Activated CD8-positive, alpha-beta T cell treated with anti-CD3 and anti-CD28 coated beads for 36 hours (primary cell): ENCODE measurements at regions of chr1 and their contacts with region 1.

Region 1: GRCh38 chr1:165367375-165367993 is 11.0 kb upstream of the LMX1A start:
- DNase-seq: peak; percentile 88
- ATAC-seq: peak; percentile 74
- H3K4me3 Mint-ChIP-seq: no peak overlapping the region
- H3K27ac Mint-ChIP-seq: no peak overlapping the region
- H3K4me1 Mint-ChIP-seq: no peaks in the 10 kb centered on the region
- H3K27me3 Mint-ChIP-seq: peaks cover 50% of the 10 kb centered on the region
- CTCF ChIP-seq: peak; percentile 92

Region 2: DNA sequence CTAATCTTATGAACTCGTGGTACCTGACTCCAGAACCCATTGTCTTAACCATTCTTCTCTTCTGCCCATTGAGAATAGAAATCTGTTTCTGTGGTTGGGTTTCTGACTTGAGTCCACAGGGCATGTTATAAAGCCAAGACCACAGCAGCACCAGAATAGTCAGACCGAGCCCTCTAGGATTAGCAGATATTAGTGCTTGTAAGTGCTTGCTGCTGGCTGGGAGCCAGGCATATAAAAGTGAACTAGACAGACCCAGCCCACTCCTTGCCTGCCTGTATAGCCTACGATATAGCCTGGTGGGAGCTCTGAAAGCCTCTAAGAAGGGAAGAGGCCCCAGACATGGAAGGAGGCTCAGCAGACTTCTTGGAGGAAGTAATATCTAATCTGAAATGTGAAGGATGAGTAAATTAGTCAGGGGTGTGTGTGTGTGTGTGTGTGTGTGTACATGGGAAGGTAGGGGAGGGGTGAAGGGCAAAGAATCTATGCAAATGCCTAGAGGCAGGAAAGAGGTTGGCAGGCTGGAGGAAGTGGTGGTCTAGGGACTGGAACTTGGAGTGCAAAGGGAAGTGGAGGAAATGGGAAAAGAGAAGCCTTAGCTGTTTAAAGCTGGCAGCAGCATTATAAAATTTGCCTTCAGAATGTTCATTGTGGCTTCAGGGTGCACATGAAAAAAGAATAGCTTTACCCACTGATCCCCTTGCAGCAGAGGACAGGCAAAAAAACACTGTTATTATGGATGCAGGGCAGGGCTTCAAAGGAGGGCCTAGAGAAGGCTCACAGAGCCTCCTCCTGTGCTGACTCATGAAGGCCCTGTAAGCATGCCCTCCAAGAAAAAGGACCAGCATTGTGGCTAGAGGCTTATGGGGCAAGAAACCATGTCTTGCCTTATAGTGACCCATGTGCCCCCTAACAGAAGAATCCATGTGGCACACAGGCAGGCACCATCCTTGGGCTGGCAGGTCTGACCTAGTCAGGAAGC is 180.2 kb before region 1 on chr1:
- CTCF ChIA-PET with region 1: no interaction called
- POLR2A ChIA-PET with region 1: no interaction called
- intact Hi-C with region 1: no loop called
- DNase-seq: no peak
- ATAC-seq: no peak
- H3K4me3 Mint-ChIP-seq: no peak overlapping the region
- H3K27ac Mint-ChIP-seq: no peak overlapping the region
- H3K4me1 Mint-ChIP-seq: no peaks in the 10 kb centered on the region
- H3K27me3 Mint-ChIP-seq: peaks cover 3% of the 10 kb centered on the region
- CTCF ChIP-seq: no peak

Region 3: GRCh38 chr1:165257969-165258459 is 109.5 kb before region 1 on chr1:
- CTCF ChIA-PET with region 1: interaction called, 27 read pairs
- POLR2A ChIA-PET with region 1: no interaction called
- intact Hi-C with region 1: no loop called
- DNase-seq: peak; percentile 66
- ATAC-seq: no peak
- H3K4me3 Mint-ChIP-seq: no peak overlapping the region
- H3K27ac Mint-ChIP-seq: no peak overlapping the region
- H3K4me1 Mint-ChIP-seq: no peaks in the 10 kb centered on the region
- H3K27me3 Mint-ChIP-seq: peaks cover 12% of the 10 kb centered on the region
- CTCF ChIP-seq: peak; percentile 67

Region 4: GRCh38 chr1:165339164-165339563 is 28.3 kb before region 1 on chr1:
- CTCF ChIA-PET with region 1: interaction called, 106 read pairs
- POLR2A ChIA-PET with region 1: no interaction called
- intact Hi-C with region 1: no loop called
- DNase-seq: no peak
- ATAC-seq: no peak
- H3K4me3 Mint-ChIP-seq: no peak overlapping the region
- H3K27ac Mint-ChIP-seq: no peak overlapping the region
- H3K4me1 Mint-ChIP-seq: no peaks in the 10 kb centered on the region
- H3K27me3 Mint-ChIP-seq: peaks cover 25% of the 10 kb centered on the region
- CTCF ChIP-seq: no peak

Region 5: GRCh38 chr1:165383067-165383466 is 15.6 kb after region 1 on chr1:
- CTCF ChIA-PET with region 1: interaction called, 57 read pairs
- POLR2A ChIA-PET with region 1: no interaction called
- intact Hi-C with region 1: no loop called
- DNase-seq: no peak
- ATAC-seq: no peak
- H3K4me3 Mint-ChIP-seq: no peak overlapping the region
- H3K27ac Mint-ChIP-seq: no peak overlapping the region
- H3K4me1 Mint-ChIP-seq: no peaks in the 10 kb centered on the region
- H3K27me3 Mint-ChIP-seq: peaks cover 33% of the 10 kb centered on the region
- CTCF ChIP-seq: no peak